ENCODE measurements at regions of chr12 and their contacts with region 1.

Region 1: GRCh38 chr12:121793838-121794533 is 498 bp upstream of the RHOF start:
- DNase-seq: peak; percentile 91 to 96
- H3K4me3 ChIP-seq: peak overlapping the region; percentile 82
- H3K4me3 Mint-ChIP-seq: peak overlapping the region; percentile 74
- H3K27ac Mint-ChIP-seq: peak overlapping the region; percentile 96
- H3K4me1 ChIP-seq: peaks cover 59% of the 10 kb centered on the region
- H3K4me1 Mint-ChIP-seq: peaks cover 33% of the 10 kb centered on the region
- H3K27me3 ChIP-seq: no peaks in the 10 kb centered on the region
- H3K27me3 Mint-ChIP-seq: no peaks in the 10 kb centered on the region
- CTCF ChIP-seq: peak; percentile 96 to 100

Region 2: GRCh38 chr12:121579981-121580868 is 213.8 kb before region 1 on chr12:
- CTCF ChIA-PET with region 1: no interaction called
- POLR2A ChIA-PET with region 1: no interaction called
- intact Hi-C with region 1: loop called (anchors 5 kb)
- DNase-seq: peak; percentile 81 to 85
- H3K4me3 ChIP-seq: peak overlapping the region; percentile 76
- H3K4me3 Mint-ChIP-seq: peak overlapping the region; percentile 93
- H3K27ac Mint-ChIP-seq: peak overlapping the region; percentile 96
- H3K4me1 ChIP-seq: peaks cover 53% of the 10 kb centered on the region
- H3K4me1 Mint-ChIP-seq: peaks cover 20% of the 10 kb centered on the region
- H3K27me3 ChIP-seq: no peaks in the 10 kb centered on the region
- H3K27me3 Mint-ChIP-seq: no peaks in the 10 kb centered on the region
- CTCF ChIP-seq: no peak

Region 3: DNA sequence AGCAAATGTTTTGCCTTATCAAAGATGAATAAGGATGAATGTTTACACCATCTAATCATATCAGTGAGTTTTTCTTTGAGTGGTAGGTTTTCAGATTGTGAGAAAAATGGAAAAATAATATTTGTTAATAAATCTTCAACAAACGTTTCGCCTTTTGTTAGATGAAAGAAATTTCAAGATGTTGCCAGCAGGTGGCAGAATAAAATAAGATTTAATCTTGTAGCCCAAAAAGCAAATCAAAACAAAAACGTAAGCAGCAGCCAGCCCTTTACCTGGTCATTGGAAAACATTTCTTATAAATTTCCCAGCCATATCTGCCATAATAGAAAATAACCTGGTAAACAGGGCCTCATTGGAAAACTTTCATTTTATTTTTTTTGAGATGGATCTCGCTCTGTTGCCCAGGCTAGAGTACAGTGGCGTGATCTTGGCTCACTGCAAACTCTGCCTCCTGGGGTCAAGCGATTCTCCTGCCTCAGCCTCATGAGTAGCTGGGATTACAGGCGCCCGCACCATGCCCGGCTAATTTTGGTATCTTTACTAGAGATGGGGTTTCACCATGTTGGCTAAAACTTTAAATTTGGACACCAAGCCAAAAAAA is 96.8 kb before region 1 on chr12:
- CTCF ChIA-PET with region 1: interaction called, 9 read pairs
- POLR2A ChIA-PET with region 1: no interaction called
- intact Hi-C with region 1: loop called (anchors 1 kb)
- DNase-seq: peak in 1 of 2 experiments; percentile 59
- H3K4me3 ChIP-seq: no peak overlapping the region
- H3K4me3 Mint-ChIP-seq: no peak overlapping the region
- H3K27ac Mint-ChIP-seq: no peak overlapping the region
- H3K4me1 ChIP-seq: no peaks in the 10 kb centered on the region
- H3K4me1 Mint-ChIP-seq: no peaks in the 10 kb centered on the region
- H3K27me3 ChIP-seq: no peaks in the 10 kb centered on the region
- H3K27me3 Mint-ChIP-seq: no peaks in the 10 kb centered on the region
- CTCF ChIP-seq: peak; percentile 33 to 52

Region 4: GRCh38 chr12:121748571-121749253 is 45.3 kb before region 1 on chr12:
- CTCF ChIA-PET with region 1: interaction called, 11 read pairs
- POLR2A ChIA-PET with region 1: no interaction called
- intact Hi-C with region 1: no loop called
- DNase-seq: peak; percentile 83 to 92
- H3K4me3 ChIP-seq: no peak overlapping the region
- H3K4me3 Mint-ChIP-seq: peak overlapping the region; percentile 65
- H3K27ac Mint-ChIP-seq: peak overlapping the region; percentile 95
- H3K4me1 ChIP-seq: peaks cover 15% of the 10 kb centered on the region
- H3K4me1 Mint-ChIP-seq: peaks cover 10% of the 10 kb centered on the region
- H3K27me3 ChIP-seq: no peaks in the 10 kb centered on the region
- H3K27me3 Mint-ChIP-seq: no peaks in the 10 kb centered on the region
- CTCF ChIP-seq: no peak

Region 5: GRCh38 chr12:121781998-121782979 is 11.7 kb before region 1 on chr12:
- CTCF ChIA-PET with region 1: interaction called, 53 read pairs
- POLR2A ChIA-PET with region 1: interaction called, 6 read pairs
- intact Hi-C with region 1: no loop called
- DNase-seq: no peak
- H3K4me3 ChIP-seq: no peak overlapping the region
- H3K4me3 Mint-ChIP-seq: no peak overlapping the region
- H3K27ac Mint-ChIP-seq: peak overlapping the region; percentile 3
- H3K4me1 ChIP-seq: peaks cover 10% of the 10 kb centered on the region
- H3K4me1 Mint-ChIP-seq: peaks cover 24% of the 10 kb centered on the region
- H3K27me3 ChIP-seq: no peaks in the 10 kb centered on the region
- H3K27me3 Mint-ChIP-seq: no peaks in the 10 kb centered on the region
- CTCF ChIP-seq: no peak

Region 6: DNA sequence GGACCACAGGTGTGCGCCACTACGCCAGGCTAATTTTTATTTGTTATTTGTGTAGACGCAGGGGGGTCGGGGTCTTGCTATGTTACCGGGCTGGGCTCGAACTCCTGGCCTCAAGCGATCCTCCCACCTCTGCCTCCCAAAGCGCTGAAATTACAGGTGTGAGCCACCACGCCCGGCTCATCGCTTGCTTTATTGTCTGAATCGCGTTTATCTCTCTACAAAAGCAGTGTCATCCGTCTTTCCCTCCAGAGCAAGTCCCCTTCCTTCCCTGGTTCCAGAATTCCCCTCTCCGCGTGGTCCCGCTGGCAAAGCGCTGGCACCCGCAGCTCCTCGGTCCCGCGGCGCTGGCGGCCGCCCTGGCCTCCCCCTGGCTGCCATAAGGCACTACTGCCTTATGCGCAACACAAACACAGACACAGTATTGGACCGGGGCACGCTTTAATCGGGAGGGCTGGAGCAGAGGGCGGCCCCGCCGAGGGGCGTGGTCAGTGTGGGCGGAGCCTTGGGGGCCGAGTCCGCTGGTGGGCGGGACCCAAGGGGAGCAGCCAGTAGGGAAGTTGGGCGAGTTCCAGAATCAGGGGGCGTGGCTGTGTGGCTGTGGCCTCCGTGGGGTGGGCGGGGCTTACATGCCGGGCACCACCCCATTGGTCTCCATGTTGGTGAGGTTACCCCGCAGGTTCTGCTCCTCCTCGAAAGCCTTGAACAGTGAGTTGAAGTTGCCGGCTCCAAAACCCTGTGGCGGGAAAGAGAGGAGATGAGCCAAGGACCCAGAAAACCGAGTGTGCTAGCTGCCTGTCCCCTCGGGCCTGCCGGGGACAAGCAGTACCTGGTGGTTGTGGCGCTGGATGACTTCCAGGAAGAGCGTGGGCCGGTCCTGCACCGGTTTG is 45.4 kb after region 1 on chr12:
- CTCF ChIA-PET with region 1: interaction called, 17 read pairs
- POLR2A ChIA-PET with region 1: no interaction called
- intact Hi-C with region 1: loop called (anchors 2 kb)
- DNase-seq: peak; percentile 98 to 100
- H3K4me3 ChIP-seq: peak overlapping the region; percentile 63
- H3K4me3 Mint-ChIP-seq: peak overlapping the region; percentile 86
- H3K27ac Mint-ChIP-seq: peak overlapping the region; percentile 72
- H3K4me1 ChIP-seq: 0 out of 2 replicates have a peak, but pooled peaks cover 4% of the 10 kb centered on the region
- H3K4me1 Mint-ChIP-seq: peaks cover 10% of the 10 kb centered on the region
- H3K27me3 ChIP-seq: no peaks in the 10 kb centered on the region
- H3K27me3 Mint-ChIP-seq: no peaks in the 10 kb centered on the region
- CTCF ChIP-seq: peak; percentile 47 to 77

Region 7: GRCh38 chr12:121893961-121894460 is 100.0 kb after region 1 on chr12:
- CTCF ChIA-PET with region 1: interaction called, 46 read pairs
- POLR2A ChIA-PET with region 1: interaction called, 4 read pairs
- intact Hi-C with region 1: no loop called
- DNase-seq: peak in 1 of 2 experiments; percentile 32
- H3K4me3 ChIP-seq: no peak overlapping the region
- H3K4me3 Mint-ChIP-seq: peak overlapping the region; percentile 34
- H3K27ac Mint-ChIP-seq: peak overlapping the region; percentile 20
- H3K4me1 ChIP-seq: peaks cover 21% of the 10 kb centered on the region
- H3K4me1 Mint-ChIP-seq: peaks cover 25% of the 10 kb centered on the region
- H3K27me3 ChIP-seq: no peaks in the 10 kb centered on the region
- H3K27me3 Mint-ChIP-seq: no peaks in the 10 kb centered on the region
- CTCF ChIP-seq: no peak